GM13976 (cell line): ENCODE measurements at regions of chr5 and their contacts with region 1.

Region 1: DNA sequence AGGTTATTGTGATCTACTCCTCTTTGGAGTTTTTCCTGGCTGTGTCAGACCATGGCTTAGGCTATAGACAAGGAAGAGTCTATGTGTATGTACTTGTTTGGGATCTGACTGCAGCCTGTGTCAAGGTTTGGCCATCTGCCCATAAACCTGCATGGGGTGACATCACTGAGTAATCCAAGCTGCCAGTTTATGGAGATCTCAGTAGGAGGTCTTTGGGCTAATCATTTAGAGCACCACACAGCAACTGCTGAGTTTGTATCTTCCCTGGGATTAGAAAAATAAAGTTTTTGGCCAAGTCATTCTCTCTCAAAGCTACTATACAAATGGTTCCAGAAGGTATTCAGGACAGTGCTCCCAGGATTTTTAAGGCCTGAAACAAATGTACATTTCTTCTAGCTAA is 65.5 kb upstream of the HSPB3 start:
- DNase-seq: no peak
- CTCF ChIP-seq: no peak

Region 2: GRCh38 chr5:54309276-54309675 is 80.7 kb before region 1 on chr5:
- in situ Hi-C with region 1: no loop called
- DNase-seq: no peak
- CTCF ChIP-seq: no peak

Region 3: GRCh38 chr5:54480296-54480695 is 90.3 kb after region 1 on chr5:
- in situ Hi-C with region 1: loop called (anchors 25 kb)
- DNase-seq: no peak
- CTCF ChIP-seq: no peak

Region 4: DNA sequence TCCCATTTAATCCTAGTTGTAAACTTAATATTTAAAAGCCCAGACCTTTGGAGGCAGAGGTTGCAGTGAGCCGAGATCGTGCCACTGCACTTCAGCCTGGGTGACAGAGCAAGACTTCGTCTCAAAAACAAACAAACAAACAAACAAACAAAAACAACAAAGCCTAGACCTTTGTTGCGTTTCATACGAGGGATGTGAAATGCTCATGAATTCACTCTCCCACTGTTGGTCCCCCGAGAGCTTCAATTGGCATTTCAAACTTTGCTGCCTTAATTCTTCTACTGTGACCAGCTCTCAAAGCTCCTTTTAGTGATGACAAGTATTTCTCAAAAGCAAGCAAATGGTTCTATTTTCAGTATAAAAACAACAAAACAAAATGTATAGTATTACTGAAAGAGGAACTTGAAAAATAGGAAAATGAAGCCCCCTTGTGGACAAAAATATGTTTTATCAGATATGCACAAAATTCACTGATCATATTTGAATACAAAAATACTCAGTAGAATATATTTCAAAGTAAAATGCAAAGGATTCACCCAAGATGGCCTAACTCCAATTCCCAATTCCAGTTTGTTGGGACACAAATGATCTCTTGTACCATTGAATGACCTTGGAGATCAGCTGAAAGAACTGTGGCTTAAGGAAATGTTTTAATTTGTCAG is 455.0 kb after region 1 on chr5:
- in situ Hi-C with region 1: no loop called
- DNase-seq: no peak
- CTCF ChIP-seq: peak; percentile 30